ENCODE measurements at regions of chr22 and their contacts with region 1.

Region 1: DNA sequence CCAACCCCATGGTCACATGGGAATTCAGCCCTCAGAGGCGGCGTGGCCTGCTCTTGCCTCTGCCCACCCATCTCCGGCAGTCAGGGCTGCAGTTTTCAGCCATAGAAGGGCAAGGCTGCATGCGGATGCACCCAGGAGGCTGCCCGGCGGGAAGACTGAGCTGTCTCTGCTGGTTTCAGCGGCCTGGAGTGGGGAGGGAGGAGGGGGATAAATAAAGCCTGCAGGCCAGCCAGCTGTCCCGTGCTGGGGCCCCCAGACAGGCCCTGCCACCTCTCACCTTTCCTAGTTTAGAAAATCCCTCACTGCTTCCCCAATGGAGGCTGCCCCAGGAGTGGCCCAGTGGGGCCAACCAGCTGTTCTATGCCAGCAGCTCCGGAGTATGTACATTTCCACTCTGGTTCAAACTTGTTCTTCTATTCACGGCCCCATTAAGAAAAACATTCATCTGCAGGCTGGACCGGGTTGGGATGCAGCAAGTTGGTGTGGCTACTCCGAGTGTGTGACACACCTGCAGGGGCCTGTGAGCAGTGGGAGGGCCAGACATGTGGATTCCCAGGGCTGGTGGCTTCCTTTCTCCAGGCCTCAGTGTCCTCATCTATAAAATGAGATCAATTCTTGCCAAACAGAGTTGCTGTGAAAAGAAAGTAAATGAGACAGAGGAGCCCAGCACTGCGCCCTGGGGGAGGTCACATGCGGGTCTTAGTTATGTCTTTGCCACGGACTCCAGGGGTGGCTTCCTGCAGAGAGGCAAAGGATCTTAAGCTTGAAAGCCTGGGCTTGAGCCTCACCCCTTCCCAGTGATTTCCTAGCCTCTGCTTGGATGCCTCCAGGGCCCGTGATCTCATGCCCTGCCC is 5.0 kb downstream of the MICALL1 start:
- DNase-seq: no peak
- H3K4me3 Mint-ChIP-seq: no peak overlapping the region
- H3K27ac Mint-ChIP-seq: no peak overlapping the region
- H3K4me1 Mint-ChIP-seq: peaks cover 36% of the 10 kb centered on the region
- H3K27me3 Mint-ChIP-seq: no peaks in the 10 kb centered on the region

Region 2: GRCh38 chr22:37925767-37926166 is 14.7 kb after region 1 on chr22:
- CTCF ChIA-PET with region 1: interaction called, 10 read pairs
- intact Hi-C with region 1: loop called (anchors 1 kb)
- DNase-seq: no peak
- H3K4me3 Mint-ChIP-seq: no peak overlapping the region
- H3K27ac Mint-ChIP-seq: no peak overlapping the region
- H3K4me1 Mint-ChIP-seq: no peaks in the 10 kb centered on the region
- H3K27me3 Mint-ChIP-seq: no peaks in the 10 kb centered on the region

Measured in activated naive CD4-positive, alpha-beta T cell treated with anti-CD3 and anti-CD28 coated beads for 36 hours (primary cell).